ENCODE measurements at regions of chr3 and their contacts with region 1.

Region 1: GRCh38 chr3:32313723-32314473 is 75.4 kb downstream of the CMTM8 start:
- DNase-seq: peak; percentile 70
- H3K4me3 Mint-ChIP-seq: peak overlapping the region; percentile 61
- H3K27ac Mint-ChIP-seq: peak overlapping the region; percentile 86
- H3K4me1 Mint-ChIP-seq: peaks cover 32% of the 10 kb centered on the region
- H3K27me3 Mint-ChIP-seq: no peaks in the 10 kb centered on the region

Region 2: DNA sequence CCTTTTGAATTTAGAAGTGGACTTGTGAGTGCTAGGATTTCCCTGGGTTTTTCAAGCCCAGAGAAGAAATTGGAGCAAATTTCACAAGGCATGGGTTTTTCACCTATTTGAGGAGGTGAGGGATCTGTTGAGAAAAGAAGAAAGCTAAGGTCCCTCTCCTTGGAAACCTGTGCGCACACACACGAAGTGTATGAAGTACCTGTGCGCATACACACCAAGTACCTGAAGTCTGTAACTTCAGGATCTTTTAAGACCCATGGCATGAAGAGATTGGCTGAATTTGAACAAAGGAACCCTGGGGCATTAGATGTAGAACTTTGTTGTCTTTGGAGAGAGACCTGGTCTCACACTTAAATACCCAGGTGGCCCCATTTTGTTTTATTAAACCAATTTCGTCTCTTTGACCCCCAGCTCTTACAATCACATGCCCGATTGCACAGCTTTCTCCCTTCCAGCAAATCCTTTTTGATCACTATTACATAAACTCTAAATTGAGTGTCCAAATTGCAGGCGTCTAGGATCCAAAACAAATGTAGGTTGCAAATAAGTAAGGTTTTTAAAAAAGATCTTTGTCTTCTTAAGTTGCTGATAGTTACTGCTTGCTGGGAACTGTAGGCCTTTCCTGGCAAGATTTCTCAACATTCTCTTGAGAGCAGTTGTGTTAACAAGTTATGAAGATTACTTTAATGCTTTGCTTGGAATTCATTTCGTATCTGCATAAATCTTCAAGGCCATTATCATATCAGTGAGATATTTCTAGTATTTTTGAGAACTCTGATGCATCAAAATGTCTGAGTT is 11.1 kb before region 1 on chr3:
- CTCF ChIA-PET with region 1: interaction called, 10 read pairs
- intact Hi-C with region 1: loop called (anchors 1 kb)
- DNase-seq: no peak
- H3K4me3 Mint-ChIP-seq: peak overlapping the region; percentile 44
- H3K27ac Mint-ChIP-seq: peak overlapping the region; percentile 88
- H3K4me1 Mint-ChIP-seq: peaks cover 55% of the 10 kb centered on the region
- H3K27me3 Mint-ChIP-seq: no peaks in the 10 kb centered on the region

Region 3: DNA sequence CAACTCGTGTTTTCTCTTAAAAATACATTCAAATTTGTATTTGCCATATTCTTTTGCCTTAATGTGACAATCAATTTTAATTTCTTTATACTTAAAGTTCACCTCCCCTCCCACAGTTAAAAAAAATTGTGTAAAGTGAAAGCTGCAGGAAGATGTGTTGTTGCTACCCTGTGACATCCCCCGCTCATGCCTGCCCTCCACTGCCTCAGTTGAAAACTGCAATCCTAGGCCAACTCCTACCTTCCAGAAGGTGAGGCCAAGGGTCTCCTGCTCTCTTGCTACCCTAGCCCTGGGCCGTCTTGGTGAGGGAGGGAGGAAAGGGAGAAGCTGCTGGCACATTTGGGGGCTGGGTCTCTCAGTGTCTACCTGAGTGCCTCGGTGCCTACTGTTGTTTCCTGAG is 20.8 kb after region 1 on chr3:
- CTCF ChIA-PET with region 1: interaction called, 9 read pairs
- intact Hi-C with region 1: loop called (anchors 2 kb)
- DNase-seq: peak; percentile 83
- H3K4me3 Mint-ChIP-seq: no peak overlapping the region
- H3K27ac Mint-ChIP-seq: peak overlapping the region; percentile 19
- H3K4me1 Mint-ChIP-seq: peaks cover 44% of the 10 kb centered on the region
- H3K27me3 Mint-ChIP-seq: no peaks in the 10 kb centered on the region

Measured in activated naive CD4-positive, alpha-beta T cell treated with anti-CD3 and anti-CD28 coated beads for 36 hours (primary cell).